ENCODE measurements at regions of chrX and their contacts with region 1.

Region 1: GRCh38 chrX:118495061-118495921 is at the start of gene DOCK11:
- DNase-seq: peak; percentile 87
- ATAC-seq: peak; percentile 84
- H3K4me3 Mint-ChIP-seq: peak within 1 kb of the TSS; percentile 99
- H3K27ac Mint-ChIP-seq: peak within 1 kb of the TSS; percentile 98
- H3K4me1 Mint-ChIP-seq: peaks cover 23% of the 10 kb centered on the region
- H3K27me3 Mint-ChIP-seq: no peaks in the 10 kb centered on the region
- CTCF ChIP-seq: no peak
- total RNA-seq, gene DOCK11: 45.1 to 49.5 TPM

Region 2: GRCh38 chrX:118536687-118537461 is 41.6 kb after region 1 on chrX:
- CTCF ChIA-PET with region 1: interaction called, 8 read pairs
- POLR2A ChIA-PET with region 1: interaction called, 30 read pairs
- intact Hi-C with region 1: loop called (anchors 5 kb)
- DNase-seq: peak; percentile 64
- ATAC-seq: peak; percentile 62
- H3K4me3 Mint-ChIP-seq: peak overlapping the region; percentile 56
- H3K27ac Mint-ChIP-seq: peak overlapping the region; percentile 95
- H3K4me1 Mint-ChIP-seq: peaks cover 70% of the 10 kb centered on the region
- H3K27me3 Mint-ChIP-seq: no peaks in the 10 kb centered on the region
- CTCF ChIP-seq: peak; percentile 40